Activated CD4-positive, alpha-beta T cell treated with anti-CD3 and anti-CD28 coated beads, Interleukin-2, amount 10 ng/mL, durations not matched to agents 24 days and 14 days (primary cell): ENCODE measurements at regions of chr19 and their contacts with region 1.

Region 1: GRCh38 chr19:47152224-47153017 is 21.8 kb downstream of the SAE1 start:
- DNase-seq: no peak
- H3K4me3 Mint-ChIP-seq: no peak overlapping the region
- H3K27ac Mint-ChIP-seq: peak overlapping the region; percentile 39
- H3K4me1 Mint-ChIP-seq: peaks cover 47% of the 10 kb centered on the region
- H3K27me3 Mint-ChIP-seq: no peaks in the 10 kb centered on the region

Region 2: DNA sequence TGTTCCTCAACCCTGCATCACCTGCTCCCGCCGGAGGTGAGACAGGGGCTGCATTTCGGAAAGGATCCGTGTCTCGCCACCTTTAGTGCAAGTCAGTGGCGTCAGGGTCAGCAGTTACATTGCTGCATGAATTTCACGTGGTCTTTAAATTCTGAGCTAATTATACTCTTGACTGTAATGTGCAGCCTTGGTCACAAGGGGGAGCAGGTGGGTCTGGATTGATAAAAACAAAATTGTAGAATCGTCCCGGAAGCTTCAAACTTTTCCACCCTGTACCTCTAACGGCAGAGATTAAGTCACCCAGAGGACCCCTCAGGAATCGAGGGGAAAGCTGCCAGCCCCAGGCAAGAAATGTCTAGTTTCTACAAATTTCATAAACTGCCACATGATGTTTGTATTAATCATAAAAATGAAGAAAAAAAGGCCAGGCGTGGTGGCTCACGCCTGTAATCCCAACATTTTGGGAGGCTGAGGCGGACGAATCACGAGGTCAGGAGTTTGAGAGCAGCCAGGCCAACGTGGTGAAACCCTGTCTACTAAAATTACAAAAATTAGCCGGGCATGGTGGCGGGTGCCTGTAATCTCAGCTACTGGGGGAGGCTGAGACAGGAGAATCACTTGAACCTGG is 58.4 kb after region 1 on chr19:
- intact Hi-C with region 1: loop called (anchors 1 kb)
- DNase-seq: peak; percentile 94
- H3K4me3 Mint-ChIP-seq: no peak overlapping the region
- H3K27ac Mint-ChIP-seq: peak overlapping the region; percentile 61
- H3K4me1 Mint-ChIP-seq: peaks cover 8% of the 10 kb centered on the region
- H3K27me3 Mint-ChIP-seq: no peaks in the 10 kb centered on the region